ENCODE measurements at regions of chr1 and their contacts with region 1.

Region 1: GRCh38 chr1:45686317-45687013 is at the start of gene GPBP1L1:
- DNase-seq: peak; percentile 97
- ATAC-seq: peak; percentile 79
- H3K4me3 Mint-ChIP-seq: peak within 1 kb of the TSS; percentile 98
- H3K27ac Mint-ChIP-seq: peak within 1 kb of the TSS; percentile 99
- H3K4me1 Mint-ChIP-seq: peaks cover 30% of the 10 kb centered on the region
- H3K27me3 Mint-ChIP-seq: no peaks in the 10 kb centered on the region; the same call in 1 of the 2 replicates
- CTCF ChIP-seq: no peak
- total RNA-seq, gene GPBP1L1: 123 to 126 TPM (median 126 TPM) in 3 replicates

Region 2: DNA sequence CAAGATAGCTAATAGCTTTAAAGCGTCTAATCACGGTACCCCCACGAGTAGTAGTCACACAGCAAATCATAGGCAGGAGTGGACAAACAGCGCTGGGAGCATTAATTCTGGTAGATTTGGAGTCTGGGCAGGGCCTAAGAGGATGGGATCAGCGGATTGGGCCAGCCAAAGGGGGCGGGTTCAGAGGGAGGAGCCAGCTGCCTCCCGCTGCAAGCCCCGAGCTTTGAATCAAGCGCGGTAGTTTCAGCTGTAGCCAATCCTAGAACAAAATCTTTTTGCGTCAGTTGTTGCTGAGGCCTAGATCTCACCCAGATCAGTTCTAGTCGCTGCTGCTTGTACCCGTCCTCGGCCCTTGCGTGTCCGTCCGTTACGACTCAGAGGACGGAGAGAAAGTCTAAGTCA is 103.2 kb before region 1 on chr1:
- CTCF ChIA-PET with region 1: no interaction called
- POLR2A ChIA-PET with region 1: interaction called, 10 read pairs
- DNase-seq: peak; percentile 95
- ATAC-seq: peak; percentile 88
- H3K4me3 Mint-ChIP-seq: peak overlapping the region; percentile 95
- H3K27ac Mint-ChIP-seq: peak overlapping the region; percentile 99
- H3K4me1 Mint-ChIP-seq: peaks cover 23% of the 10 kb centered on the region
- H3K27me3 Mint-ChIP-seq: peaks cover 2% of the 10 kb centered on the region; the same call in 1 of the 2 replicates
- CTCF ChIP-seq: no peak

Region 3: GRCh38 chr1:45604239-45604638 is 82.2 kb before region 1 on chr1:
- CTCF ChIA-PET with region 1: no interaction called
- POLR2A ChIA-PET with region 1: no interaction called
- DNase-seq: no peak
- ATAC-seq: no peak
- H3K4me3 Mint-ChIP-seq: no peak overlapping the region
- H3K27ac Mint-ChIP-seq: peak overlapping the region; percentile 32; the same call in 1 of the 2 replicates
- H3K4me1 Mint-ChIP-seq: peaks cover 26% of the 10 kb centered on the region
- H3K27me3 Mint-ChIP-seq: no peaks in the 10 kb centered on the region
- CTCF ChIP-seq: no peak

Region 4: GRCh38 chr1:45785583-45785982 is 99.1 kb after region 1 on chr1:
- CTCF ChIA-PET with region 1: no interaction called
- POLR2A ChIA-PET with region 1: no interaction called
- DNase-seq: no peak
- ATAC-seq: no peak
- H3K4me3 Mint-ChIP-seq: no peak overlapping the region
- H3K27ac Mint-ChIP-seq: no peak overlapping the region
- H3K4me1 Mint-ChIP-seq: no peaks in the 10 kb centered on the region
- H3K27me3 Mint-ChIP-seq: no peaks in the 10 kb centered on the region
- CTCF ChIP-seq: no peak

Region 5: GRCh38 chr1:45803301-45803780 is 116.9 kb after region 1 on chr1 and contains the start of gene MAST2:
- CTCF ChIA-PET with region 1: interaction called, 4 read pairs
- POLR2A ChIA-PET with region 1: interaction called, 14 read pairs
- DNase-seq: peak; percentile 84
- ATAC-seq: peak; percentile 87
- H3K4me3 Mint-ChIP-seq: peak within 1 kb of the TSS; percentile 94
- H3K27ac Mint-ChIP-seq: peak within 1 kb of the TSS; percentile 89
- H3K4me1 Mint-ChIP-seq: peaks cover 31% of the 10 kb centered on the region
- H3K27me3 Mint-ChIP-seq: no peaks in the 10 kb centered on the region
- CTCF ChIP-seq: no peak
- total RNA-seq, gene MAST2: 27.8 to 37.2 TPM (median 30.7 TPM) in 3 replicates